ENCODE measurements at regions of chr16 and their contacts with region 1.

Region 1: DNA sequence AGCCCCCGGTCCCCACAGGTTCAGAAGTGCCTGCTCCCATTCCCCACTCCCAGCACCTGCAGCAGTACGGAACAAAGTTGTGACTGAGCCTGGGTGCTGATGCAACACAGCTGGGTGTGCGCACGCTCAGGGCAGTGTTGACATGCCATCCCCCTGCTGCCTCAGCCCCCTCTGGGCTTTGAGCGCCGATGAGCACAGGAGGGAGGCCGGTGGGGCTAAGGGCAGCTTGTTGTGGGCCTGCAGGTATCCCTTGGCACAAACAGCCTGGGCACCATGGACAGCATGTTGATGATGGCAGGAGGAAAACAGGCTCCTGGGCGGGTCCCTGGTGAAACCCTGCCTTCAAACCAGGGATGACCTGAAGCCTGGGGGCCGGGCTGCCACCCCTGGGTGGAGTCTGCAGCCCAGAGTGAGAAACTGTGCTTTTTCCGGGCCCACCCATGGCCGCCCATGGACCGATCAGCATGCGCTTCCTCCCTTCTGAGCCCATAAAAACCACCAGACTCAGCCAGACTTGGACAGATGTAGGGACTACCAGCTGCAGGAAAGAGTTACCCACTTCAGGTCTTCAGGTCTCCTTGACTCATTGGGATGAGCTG is 175.5 kb downstream of the PHKB start:
- DNase-seq: no peak
- H3K4me3 ChIP-seq: no peak overlapping the region
- H3K27me3 ChIP-seq: no peaks in the 10 kb centered on the region
- CTCF ChIP-seq: no peak

Region 2: GRCh38 chr16:47229053-47230050 is 407.2 kb before region 1 on chr16:
- CTCF ChIA-PET with region 1: no interaction called
- POLR2A ChIA-PET with region 1: no interaction called
- DNase-seq: no peak
- H3K4me3 ChIP-seq: no peak overlapping the region
- H3K27me3 ChIP-seq: no peaks in the 10 kb centered on the region
- CTCF ChIP-seq: no peak

Region 3: DNA sequence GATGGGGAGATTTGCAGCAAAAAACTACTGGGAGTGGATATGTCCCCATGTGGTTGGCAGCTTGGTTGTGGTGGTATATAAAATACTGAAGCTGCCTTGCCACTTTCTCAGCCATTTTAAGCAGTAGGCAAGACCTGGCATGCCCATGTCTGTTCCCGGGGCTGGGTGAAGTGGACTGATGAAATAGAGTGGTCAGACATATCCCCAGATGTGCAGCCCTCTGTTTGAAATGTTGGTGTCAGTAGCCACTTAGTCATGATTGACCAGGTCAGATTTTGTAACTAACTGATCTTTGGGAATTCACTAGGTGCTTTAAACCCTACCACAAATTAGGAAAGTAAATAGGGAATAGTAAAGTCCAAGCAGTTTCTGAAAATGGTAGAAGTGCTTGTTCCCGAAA is 23.9 kb before region 1 on chr16:
- CTCF ChIA-PET with region 1: no interaction called
- POLR2A ChIA-PET with region 1: interaction called, 11 read pairs
- DNase-seq: no peak
- H3K4me3 ChIP-seq: no peak overlapping the region
- H3K27me3 ChIP-seq: no peaks in the 10 kb centered on the region
- CTCF ChIP-seq: no peak

Region 4: DNA sequence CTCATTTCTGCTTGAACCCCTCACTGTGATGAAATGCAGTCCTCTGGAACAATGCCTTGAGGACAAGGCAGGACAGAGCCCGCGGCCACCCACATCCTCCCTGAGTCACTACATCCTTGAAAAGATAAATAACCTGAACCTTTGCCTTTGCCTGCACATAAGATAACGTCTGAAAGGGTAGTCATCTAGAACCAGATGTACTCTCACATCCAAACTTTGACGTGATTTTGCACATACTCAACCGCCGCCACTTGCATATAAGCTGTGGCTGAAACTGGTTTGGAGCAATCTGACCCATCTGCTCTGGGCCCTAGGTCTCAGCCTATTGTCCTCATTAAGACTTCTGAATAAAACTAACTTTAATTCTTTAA is 76.6 kb after region 1 on chr16:
- CTCF ChIA-PET with region 1: no interaction called
- POLR2A ChIA-PET with region 1: no interaction called
- DNase-seq: peak; percentile 11
- H3K4me3 ChIP-seq: no peak overlapping the region
- H3K27me3 ChIP-seq: no peaks in the 10 kb centered on the region
- CTCF ChIP-seq: no peak

Measured in BJ (cell line).